Tibial artery (tissue), 4 donors: ENCODE measurements at regions of chrX and their contacts with region 1.

Region 1: GRCh38 chrX:103817502-103817901 is 14.6 kb downstream of the RAB9B start:
- DNase-seq: no peak
- H3K4me3 ChIP-seq: no peak overlapping the region
- H3K27ac ChIP-seq: no peak overlapping the region
- H3K4me1 ChIP-seq: no peaks in the 10 kb centered on the region
- H3K27me3 ChIP-seq: no peaks in the 10 kb centered on the region
- CTCF ChIP-seq: peak; percentile 39 to 63

Region 2: GRCh38 chrX:103533511-103534216 is 283.8 kb before region 1 on chrX:
- intact Hi-C with region 1: loop called (anchors 10 kb)
- DNase-seq: peak; percentile 83 to 85
- H3K4me3 ChIP-seq: peak overlapping the region; percentile 37 to 44
- H3K27ac ChIP-seq: peak overlapping the region; percentile 39 to 81
- H3K4me1 ChIP-seq: peaks cover 0 to 49% (median 6%) of the 10 kb centered on the region in 4 donors
- H3K27me3 ChIP-seq: no peaks in the 10 kb centered on the region
- CTCF ChIP-seq: peak; percentile 65 to 77